ENCODE measurements at regions of chr10 and their contacts with region 1.

Region 1: DNA sequence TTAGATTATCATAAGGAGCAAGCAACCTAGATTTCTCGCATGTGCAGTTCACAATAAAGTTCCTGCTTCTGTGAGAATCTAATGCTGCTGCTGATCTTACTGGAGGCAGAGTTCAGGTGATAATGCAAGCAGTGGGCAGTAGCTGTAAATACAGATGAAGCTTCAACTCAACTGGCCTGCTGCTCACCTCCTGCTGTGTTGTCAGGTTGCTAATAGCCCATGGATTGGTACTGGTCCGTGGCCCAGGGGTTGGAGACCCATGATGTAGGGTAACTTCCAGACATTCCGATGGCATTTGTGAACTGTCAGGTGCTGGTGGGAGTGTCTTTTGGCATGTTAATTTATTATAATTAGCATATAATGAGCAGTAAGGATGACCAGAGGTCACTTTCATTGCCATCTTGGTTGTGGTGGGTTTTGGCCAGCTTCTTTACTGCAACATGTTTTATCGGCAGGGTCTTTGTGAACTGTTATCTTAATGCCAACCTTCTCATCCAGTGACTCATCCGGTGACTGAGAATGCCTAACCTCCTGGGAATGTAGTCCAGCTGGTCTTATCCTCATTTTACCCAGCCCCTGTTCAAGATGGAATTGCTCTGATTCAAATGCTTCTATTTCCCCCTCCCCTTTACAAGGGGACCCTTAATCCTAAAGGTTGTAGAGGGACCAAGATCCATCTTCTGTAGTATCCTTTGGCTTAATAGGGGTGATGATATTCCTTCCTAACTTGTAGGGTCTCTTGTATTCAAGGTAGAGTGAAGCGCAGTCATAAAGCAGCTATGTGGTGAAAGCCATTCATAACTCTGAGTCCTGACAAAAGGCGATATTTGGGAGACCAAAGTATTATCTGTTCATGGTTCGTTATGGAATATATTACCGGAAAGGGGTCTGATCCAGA is 165.8 kb downstream of the CCSER2 start:
- DNase-seq: peak; percentile 81 to 96
- H3K4me3 ChIP-seq: peak overlapping the region; percentile 51
- H3K27ac ChIP-seq: peak overlapping the region; percentile 83
- H3K4me1 ChIP-seq: peaks cover 59% of the 10 kb centered on the region
- H3K27me3 ChIP-seq: no peaks in the 10 kb centered on the region
- CTCF ChIP-seq: 0 out of 2 replicates have a peak, but pooled peaks have one; percentile 12

Region 2: GRCh38 chr10:84224411-84225028 is 269.7 kb before region 1 on chr10:
- CTCF ChIA-PET with region 1: no interaction called
- POLR2A ChIA-PET with region 1: no interaction called
- intact Hi-C with region 1: no loop called
- DNase-seq: no peak
- H3K4me3 ChIP-seq: no peak overlapping the region
- H3K27ac ChIP-seq: no peak overlapping the region
- H3K4me1 ChIP-seq: no peaks in the 10 kb centered on the region
- H3K27me3 ChIP-seq: peaks cover 64% of the 10 kb centered on the region
- CTCF ChIP-seq: no peak

Region 3: DNA sequence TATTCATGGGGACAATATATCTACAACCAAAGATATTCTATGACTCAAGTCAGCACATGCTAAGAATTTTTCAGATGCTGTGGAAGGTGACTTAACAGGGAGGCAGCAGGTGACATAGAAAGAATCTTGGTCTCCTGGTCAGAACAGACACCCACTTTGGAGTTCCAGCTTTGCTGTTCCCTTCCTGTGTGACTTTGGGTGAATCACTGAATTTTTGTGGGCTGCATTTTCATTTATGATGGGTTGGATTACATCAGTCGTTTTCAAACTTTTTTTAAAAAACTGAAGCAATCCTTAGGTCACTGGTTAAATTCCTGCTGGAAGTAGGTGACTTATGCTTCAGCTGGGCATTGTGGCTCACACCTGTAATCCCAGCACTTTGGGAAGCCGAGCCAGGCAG is 224.4 kb before region 1 on chr10:
- CTCF ChIA-PET with region 1: no interaction called
- POLR2A ChIA-PET with region 1: no interaction called
- intact Hi-C with region 1: loop called (anchors 1 kb)
- DNase-seq: peak; percentile 36 to 80
- H3K4me3 ChIP-seq: no peak overlapping the region
- H3K27ac ChIP-seq: peak overlapping the region; percentile 64
- H3K4me1 ChIP-seq: peaks cover 20% of the 10 kb centered on the region
- H3K27me3 ChIP-seq: no peaks in the 10 kb centered on the region
- CTCF ChIP-seq: no peak

Region 4: GRCh38 chr10:84328418-84329195 is 165.6 kb before region 1 on chr10 and contains the start of gene CCSER2:
- CTCF ChIA-PET with region 1: no interaction called
- POLR2A ChIA-PET with region 1: no interaction called
- intact Hi-C with region 1: loop called (anchors 5 kb)
- DNase-seq: peak; percentile 48 to 99
- H3K4me3 ChIP-seq: peak within 1 kb of the TSS; percentile 77
- H3K27ac ChIP-seq: peak within 1 kb of the TSS; percentile 51
- H3K4me1 ChIP-seq: peaks cover 15% of the 10 kb centered on the region
- H3K27me3 ChIP-seq: no peaks in the 10 kb centered on the region
- CTCF ChIP-seq: no peak
- total RNA-seq, gene CCSER2: 42.2 and 56.6 TPM in 2 replicates

Region 5: GRCh38 chr10:84424731-84425167 is 69.5 kb before region 1 on chr10:
- CTCF ChIA-PET with region 1: no interaction called
- POLR2A ChIA-PET with region 1: no interaction called
- intact Hi-C with region 1: loop called (anchors 1 kb)
- DNase-seq: peak; percentile 75 to 81
- H3K4me3 ChIP-seq: no peak overlapping the region
- H3K27ac ChIP-seq: peak overlapping the region; percentile 7
- H3K4me1 ChIP-seq: peaks cover 18% of the 10 kb centered on the region
- H3K27me3 ChIP-seq: no peaks in the 10 kb centered on the region
- CTCF ChIP-seq: no peak

Region 6: GRCh38 chr10:84456126-84456525 is 38.1 kb before region 1 on chr10:
- CTCF ChIA-PET with region 1: no interaction called
- POLR2A ChIA-PET with region 1: no interaction called
- intact Hi-C with region 1: no loop called
- DNase-seq: peak in 1 of 2 experiments; percentile 10
- H3K4me3 ChIP-seq: no peak overlapping the region
- H3K27ac ChIP-seq: no peak overlapping the region
- H3K4me1 ChIP-seq: peaks cover 7% of the 10 kb centered on the region
- H3K27me3 ChIP-seq: no peaks in the 10 kb centered on the region
- CTCF ChIP-seq: no peak

Region 7: DNA sequence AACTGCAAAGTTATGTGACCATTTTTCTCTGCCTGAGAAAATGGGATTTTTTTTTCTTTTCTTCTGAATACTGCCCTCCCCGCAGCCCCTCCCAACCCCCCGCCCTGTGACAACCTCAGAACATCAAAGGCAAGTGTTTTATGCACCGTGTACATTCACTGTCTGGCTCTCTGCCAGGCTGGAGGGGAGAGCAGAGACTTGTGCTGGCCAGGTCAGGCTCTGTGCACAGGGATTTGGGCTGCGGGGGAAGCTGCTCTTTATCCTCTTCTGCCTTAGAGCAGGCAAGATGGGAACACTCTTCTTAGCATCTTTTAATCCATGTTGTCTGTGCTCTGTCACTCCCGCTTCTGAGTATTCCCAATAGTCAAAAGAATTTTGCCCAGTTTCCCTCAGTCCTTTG is 29.3 kb after region 1 on chr10:
- CTCF ChIA-PET with region 1: no interaction called
- POLR2A ChIA-PET with region 1: no interaction called
- intact Hi-C with region 1: loop called (anchors 1 kb)
- DNase-seq: no peak
- H3K4me3 ChIP-seq: no peak overlapping the region
- H3K27ac ChIP-seq: no peak overlapping the region
- H3K4me1 ChIP-seq: peaks cover 28% of the 10 kb centered on the region
- H3K27me3 ChIP-seq: no peaks in the 10 kb centered on the region
- CTCF ChIP-seq: no peak

Region 8: DNA sequence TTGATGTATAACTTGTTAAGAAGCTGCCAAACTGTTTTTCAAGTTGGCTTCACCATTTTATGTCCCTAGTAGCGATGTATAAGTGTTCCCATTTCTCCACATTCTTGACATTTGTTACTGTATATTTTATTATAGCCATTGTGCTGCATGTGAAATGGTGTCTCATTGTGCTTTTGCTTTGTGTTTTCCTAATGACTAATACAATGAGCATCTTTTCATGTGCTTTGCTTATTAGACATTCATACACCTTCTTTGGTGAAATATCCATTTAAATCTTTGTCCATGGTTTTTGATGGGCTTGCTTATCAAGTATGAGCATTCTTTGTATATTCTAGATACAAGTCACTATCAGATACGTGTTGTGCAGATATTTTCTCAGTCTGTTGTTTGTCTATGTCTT is 37.2 kb after region 1 on chr10:
- CTCF ChIA-PET with region 1: interaction called, 11 read pairs
- POLR2A ChIA-PET with region 1: no interaction called
- intact Hi-C with region 1: loop called (anchors 1 kb)
- DNase-seq: peak in 1 of 2 experiments; percentile 50
- H3K4me3 ChIP-seq: no peak overlapping the region
- H3K27ac ChIP-seq: no peak overlapping the region
- H3K4me1 ChIP-seq: peaks cover 38% of the 10 kb centered on the region
- H3K27me3 ChIP-seq: no peaks in the 10 kb centered on the region
- CTCF ChIP-seq: no peak

Measured in PC-9 (cell line).